PC-9 (cell line): ENCODE measurements at regions of chr14 and their contacts with region 1.

Region 1: GRCh38 chr14:36717363-36717762 is 55.7 kb downstream of the PAX9 start:
- DNase-seq: no peak
- H3K4me3 ChIP-seq: no peak overlapping the region
- H3K27ac ChIP-seq: no peak overlapping the region
- H3K4me1 ChIP-seq: no peaks in the 10 kb centered on the region
- H3K27me3 ChIP-seq: no peaks in the 10 kb centered on the region
- CTCF ChIP-seq: no peak

Region 2: DNA sequence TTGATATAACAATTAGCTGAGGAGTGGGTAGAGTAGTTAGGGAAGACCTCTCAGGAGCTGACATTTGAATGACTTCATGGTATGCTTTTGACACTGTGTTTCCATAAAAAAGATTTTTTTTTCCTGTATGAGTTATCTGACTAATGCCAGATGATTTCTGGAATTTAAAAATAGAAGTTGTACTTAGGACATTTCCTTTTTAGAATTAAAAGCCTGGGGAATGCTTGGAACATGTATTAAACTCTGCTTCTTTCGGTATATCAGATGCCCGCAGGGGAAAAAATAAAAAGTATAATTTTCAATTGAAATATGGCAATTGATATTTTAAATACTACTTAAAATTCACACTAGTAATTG is 850.1 kb before region 1 on chr14:
- CTCF ChIA-PET with region 1: interaction called, 18 read pairs
- POLR2A ChIA-PET with region 1: no interaction called
- intact Hi-C with region 1: no loop called
- DNase-seq: no peak
- H3K4me3 ChIP-seq: no peak overlapping the region
- H3K27ac ChIP-seq: no peak overlapping the region
- H3K4me1 ChIP-seq: no peaks in the 10 kb centered on the region
- H3K27me3 ChIP-seq: no peaks in the 10 kb centered on the region
- CTCF ChIP-seq: no peak

Region 3: GRCh38 chr14:36604757-36605505 is 112.4 kb before region 1 on chr14:
- CTCF ChIA-PET with region 1: no interaction called
- POLR2A ChIA-PET with region 1: no interaction called
- intact Hi-C with region 1: no loop called
- DNase-seq: peak; percentile 51 to 64
- H3K4me3 ChIP-seq: no peak overlapping the region
- H3K27ac ChIP-seq: no peak overlapping the region
- H3K4me1 ChIP-seq: no peaks in the 10 kb centered on the region
- H3K27me3 ChIP-seq: no peaks in the 10 kb centered on the region
- CTCF ChIP-seq: peak; percentile 73